Heart right ventricle (tissue), 16 donors: ENCODE measurements at regions of chr1 and their contacts with region 1.

Region 1: GRCh38 chr1:203486618-203487370 is 7.2 kb upstream of the OPTC start:
- DNase-seq: no peak
- ATAC-seq: peak in 6 of 8 donors; percentile 2 to 30 (median 12)
- H3K4me3 ChIP-seq: peak overlapping the region in 9 of 10 donors; percentile 16 to 51 (median 44)
- H3K27ac ChIP-seq: peak overlapping the region; percentile 72 to 91 (median 82)
- H3K4me1 ChIP-seq: peaks cover 0 to 34% (median 12%) of the 10 kb centered on the region in 9 donors
- H3K27me3 ChIP-seq: no peaks in the 10 kb centered on the region
- CTCF ChIP-seq: no peak

Region 2: DNA sequence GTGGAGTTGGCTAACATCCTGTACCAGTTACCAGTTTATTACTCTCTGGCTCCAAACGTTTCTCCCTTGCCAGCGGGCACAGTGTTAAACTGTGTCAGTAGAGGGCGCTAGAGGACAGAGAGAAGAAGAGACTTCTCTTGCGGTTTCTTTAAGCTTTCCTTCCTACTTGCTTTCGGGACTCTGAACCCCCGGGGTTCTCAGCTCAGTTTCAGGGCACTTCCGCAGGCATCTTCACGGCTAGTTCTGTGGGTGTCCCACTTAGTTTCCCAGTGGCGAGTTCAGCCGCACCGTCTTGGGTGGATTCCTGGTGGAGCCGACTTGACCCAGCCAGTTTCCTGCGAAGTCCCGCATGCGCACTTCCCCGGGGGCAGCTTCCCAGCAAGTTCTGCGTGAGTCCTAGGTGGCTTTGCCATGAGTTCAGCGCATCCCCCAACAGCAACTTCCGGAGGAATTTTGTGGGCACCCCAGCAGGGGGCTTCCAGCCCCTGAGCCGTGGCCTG is 219.4 kb before region 1 on chr1:
- intact Hi-C with region 1: loop called (anchors 1 to 10 kb)
- DNase-seq: peak; percentile 83 to 87
- ATAC-seq: peak; percentile 60 to 83 (median 74)
- H3K4me3 ChIP-seq: peak overlapping the region in 9 of 10 donors; percentile 37 to 65 (median 59)
- H3K27ac ChIP-seq: peak overlapping the region; percentile 28 to 92 (median 82)
- H3K4me1 ChIP-seq: peaks cover 3 to 25% (median 15%) of the 10 kb centered on the region in 9 donors
- H3K27me3 ChIP-seq: no peaks in the 10 kb centered on the region
- CTCF ChIP-seq: peak; percentile 85 to 99 (median 95)

Region 3: GRCh38 chr1:203287109-203287893 is 199.5 kb before region 1 on chr1:
- intact Hi-C with region 1: no loop called
- DNase-seq: peak; percentile 55 to 86
- ATAC-seq: peak; percentile 42 to 67 (median 52)
- H3K4me3 ChIP-seq: peak overlapping the region in 1 of 10 donors; percentile 19
- H3K27ac ChIP-seq: peak overlapping the region; percentile 57 to 99 (median 88)
- H3K4me1 ChIP-seq: peaks cover 22 to 85% (median 74%) of the 10 kb centered on the region in 9 donors
- H3K27me3 ChIP-seq: no peaks in the 10 kb centered on the region
- CTCF ChIP-seq: peak in 1 of 9 donors; percentile 6

Region 4: GRCh38 chr1:203368624-203369451 is 118.0 kb before region 1 on chr1:
- intact Hi-C with region 1: loop called in 7 of 10 experiments (anchors 1 to 5 kb)
- DNase-seq: peak; percentile 56 to 76
- ATAC-seq: peak; percentile 85 to 94 (median 92)
- H3K4me3 ChIP-seq: no peak overlapping the region
- H3K27ac ChIP-seq: peak overlapping the region in 9 of 10 donors; percentile 17 to 79 (median 56)
- H3K4me1 ChIP-seq: peaks cover 1 to 33% (median 26%) of the 10 kb centered on the region in 9 donors
- H3K27me3 ChIP-seq: peaks cover 0 to 7% (median 0%) of the 10 kb centered on the region in 7 donors
- CTCF ChIP-seq: peak in 8 of 9 donors; percentile 25 to 73 (median 56)